Breast epithelium (tissue), 4 donors: ENCODE measurements at regions of chr1 and their contacts with region 1.

Region 1: GRCh38 chr1:156961709-156962108 is 41.3 kb downstream of the LRRC71 start:
- DNase-seq: no peak
- H3K4me3 ChIP-seq: no peak overlapping the region
- H3K27ac ChIP-seq: no peak overlapping the region
- H3K4me1 ChIP-seq: no peaks in the 10 kb centered on the region
- H3K27me3 ChIP-seq: no peaks in the 10 kb centered on the region
- CTCF ChIP-seq: no peak
- POLR2A ChIP-seq: no peak

Region 2: DNA sequence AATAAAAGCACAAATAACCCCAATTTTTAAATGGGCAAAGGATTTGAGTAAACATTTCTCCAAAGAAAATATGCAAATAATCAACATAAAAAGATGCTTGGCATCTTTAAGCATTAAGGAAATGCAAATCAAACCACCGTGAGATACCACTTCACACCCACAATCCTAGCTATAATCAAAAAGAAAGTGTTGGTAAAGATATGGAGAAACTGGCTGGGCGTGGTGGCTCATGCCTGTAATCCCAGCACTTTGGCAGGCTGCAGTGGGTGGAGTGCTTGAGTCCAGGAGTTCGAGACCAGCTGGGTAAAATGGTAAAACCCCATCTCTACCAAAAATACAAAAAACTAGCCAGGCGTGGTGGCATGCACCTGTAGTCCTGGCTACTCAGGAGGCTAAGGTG is 67.0 kb after region 1 on chr1:
- intact Hi-C with region 1: loop called (anchors 2 kb)
- DNase-seq: no peak
- H3K4me3 ChIP-seq: no peak overlapping the region
- H3K27ac ChIP-seq: no peak overlapping the region
- H3K4me1 ChIP-seq: peaks cover 0 to 7% of the 10 kb centered on the region in 2 donors
- H3K27me3 ChIP-seq: no peaks in the 10 kb centered on the region
- CTCF ChIP-seq: no peak
- POLR2A ChIP-seq: no peak